ENCODE measurements at regions of chr10 and their contacts with region 1.

Region 1: DNA sequence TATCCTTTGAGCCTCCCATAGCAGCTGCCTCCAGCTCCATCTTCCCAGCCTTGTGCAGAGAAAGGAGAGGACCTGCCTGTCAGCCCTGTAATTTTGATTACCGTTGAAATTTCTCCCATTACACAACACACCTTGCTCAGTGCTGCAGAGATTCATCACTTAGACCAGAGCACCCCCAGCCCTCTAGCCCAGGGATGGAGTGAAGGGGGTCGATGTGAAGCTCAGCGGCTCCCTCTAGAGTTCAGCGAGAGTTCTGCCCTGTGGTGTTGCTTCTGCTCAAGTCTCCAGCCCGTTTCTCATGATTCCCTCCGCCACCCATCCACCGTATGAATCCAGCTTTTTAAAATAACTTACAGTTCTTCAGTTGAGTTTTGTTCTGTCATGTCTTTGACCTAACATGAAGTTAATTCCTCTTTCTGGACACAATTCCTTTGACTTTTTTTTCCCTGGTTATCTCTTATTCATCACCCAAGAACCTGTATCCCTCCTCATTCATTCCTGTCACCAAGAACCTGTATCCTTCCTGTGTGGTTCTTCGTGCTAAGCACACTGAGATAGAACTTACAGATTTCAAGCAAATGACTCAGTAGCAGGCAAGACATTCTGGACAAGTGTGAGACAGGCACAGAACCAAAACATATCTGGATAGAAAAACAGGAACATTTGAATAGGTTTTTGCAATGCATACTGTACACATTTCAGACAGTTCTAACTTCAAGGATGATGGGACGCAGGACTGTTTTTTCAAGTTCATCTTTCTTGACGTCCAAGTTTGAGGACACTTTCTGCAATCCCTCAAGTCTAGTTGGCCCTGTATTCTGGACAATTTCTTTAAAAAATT is 35.0 kb upstream of the ZNF32 start:
- DNase-seq: no peak
- ATAC-seq: no peak
- H3K4me3 ChIP-seq: no peak overlapping the region
- H3K27ac ChIP-seq: peak overlapping the region in 1 of 10 donors; percentile 37
- H3K4me1 ChIP-seq: peaks cover 0 to 38% (median 16%) of the 10 kb centered on the region in 9 donors
- H3K27me3 ChIP-seq: no peaks in the 10 kb centered on the region
- CTCF ChIP-seq: peak in 7 of 9 donors; percentile 22 to 41 (median 31)

Region 2: GRCh38 chr10:44316187-44316921 is 632.7 kb after region 1 on chr10:
- intact Hi-C with region 1: loop called in 5 of 10 experiments (anchors 2 to 10 kb)
- DNase-seq: no peak
- ATAC-seq: peak in 1 of 8 donors; percentile 55
- H3K4me3 ChIP-seq: no peak overlapping the region
- H3K27ac ChIP-seq: no peak overlapping the region
- H3K4me1 ChIP-seq: peaks cover 1 to 22% (median 10%) of the 10 kb centered on the region in 9 donors
- H3K27me3 ChIP-seq: no peaks in the 10 kb centered on the region
- CTCF ChIP-seq: no peak

Region 3: GRCh38 chr10:44864637-44865288 is 1181.1 kb after region 1 on chr10:
- intact Hi-C with region 1: loop called in 2 of 10 experiments (anchors 5 kb)
- DNase-seq: peak; percentile 91 to 95
- ATAC-seq: peak; percentile 92 to 98 (median 97)
- H3K4me3 ChIP-seq: peak overlapping the region; percentile 29 to 60 (median 54)
- H3K27ac ChIP-seq: peak overlapping the region; percentile 0 to 72 (median 63)
- H3K4me1 ChIP-seq: peaks cover 3 to 35% (median 16%) of the 10 kb centered on the region in 9 donors
- H3K27me3 ChIP-seq: peaks cover 0 to 30% (median 7%) of the 10 kb centered on the region in 7 donors
- CTCF ChIP-seq: peak; percentile 95 to 99 (median 98)

Measured in heart right ventricle (tissue), 16 donors.